ENCODE measurements at regions of chr12 and their contacts with region 1.

Region 1: GRCh38 chr12:1117970-1118563 is 127.0 kb downstream of the ERC1 start:
- H3K4me3 ChIP-seq: no peak overlapping the region
- H3K27ac ChIP-seq: no peak overlapping the region
- H3K4me1 ChIP-seq: no peaks in the 10 kb centered on the region
- CTCF ChIP-seq: peak; percentile 75

Region 2: DNA sequence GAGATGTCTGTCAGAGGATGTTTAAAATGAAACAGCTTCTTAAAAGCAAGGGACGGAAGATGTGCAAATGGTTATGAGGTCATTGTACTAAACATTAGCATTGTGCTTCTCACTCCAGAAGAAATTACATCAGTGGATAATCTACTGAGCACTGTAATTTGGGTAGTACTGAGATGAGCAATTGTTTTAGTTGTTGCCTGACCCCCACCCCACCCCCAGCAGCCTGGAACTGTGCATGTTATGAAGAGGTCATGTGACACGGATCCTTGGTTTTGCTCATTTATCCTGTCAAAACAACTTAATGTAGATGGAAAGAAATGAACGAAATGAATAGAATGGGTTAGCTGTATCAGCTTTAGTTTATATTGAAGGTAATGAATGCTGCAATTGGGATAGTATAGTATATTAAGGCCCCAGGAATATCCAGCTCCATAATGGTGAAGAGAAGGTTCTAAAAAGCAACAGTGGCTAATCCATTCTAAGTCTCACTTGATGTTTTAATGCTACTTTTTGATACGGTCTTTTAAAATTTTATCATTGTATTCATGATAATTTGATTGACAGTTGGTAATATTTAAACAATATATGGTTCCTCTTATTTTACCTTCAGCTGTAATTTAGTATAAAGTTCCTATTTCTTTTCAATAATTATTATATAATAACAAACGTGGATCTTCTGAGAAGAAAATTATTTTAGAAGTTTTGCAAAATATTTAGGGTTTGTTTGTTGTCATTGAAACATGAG is 307.2 kb before region 1 on chr12:
- CTCF ChIA-PET with region 1: interaction called, 20 read pairs
- POLR2A ChIA-PET with region 1: no interaction called
- H3K4me3 ChIP-seq: no peak overlapping the region
- H3K27ac ChIP-seq: no peak overlapping the region
- H3K4me1 ChIP-seq: peaks cover 28% of the 10 kb centered on the region
- CTCF ChIP-seq: no peak

Region 3: DNA sequence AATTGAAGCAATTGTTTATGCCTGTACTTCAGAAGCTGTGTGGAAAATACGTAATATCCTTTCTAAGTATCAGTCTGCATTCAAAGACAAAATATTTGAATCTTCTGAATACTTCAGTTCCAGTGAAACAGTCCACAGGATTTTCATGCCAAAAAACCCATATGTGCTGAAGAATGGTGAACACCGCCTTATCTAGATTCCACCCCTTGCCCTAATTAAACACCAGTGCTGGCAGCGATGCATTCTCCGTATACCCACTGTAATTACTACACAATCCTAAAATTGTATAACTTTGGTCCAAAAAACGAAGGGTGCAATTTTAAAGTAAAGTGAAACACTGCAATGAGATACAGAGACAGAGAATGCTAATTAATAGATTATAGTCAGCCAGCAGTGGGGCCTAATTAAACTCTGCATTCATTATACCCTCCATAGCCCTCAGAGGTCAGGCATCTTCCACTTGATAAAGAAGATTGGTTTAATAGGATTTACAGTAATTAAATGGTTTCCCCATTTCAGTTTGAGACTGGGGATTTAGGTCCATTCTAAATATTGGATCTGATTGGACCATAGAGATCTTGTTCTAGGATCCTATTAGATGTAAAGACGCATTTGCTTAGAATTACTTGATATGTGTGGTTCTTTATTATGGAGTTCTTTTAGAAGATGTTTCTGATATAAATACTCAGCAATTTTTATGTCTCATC is 83.2 kb before region 1 on chr12:
- CTCF ChIA-PET with region 1: no interaction called
- POLR2A ChIA-PET with region 1: no interaction called
- H3K4me3 ChIP-seq: no peak overlapping the region
- H3K27ac ChIP-seq: no peak overlapping the region
- H3K4me1 ChIP-seq: no peaks in the 10 kb centered on the region
- CTCF ChIP-seq: no peak

Region 4: GRCh38 chr12:1138691-1139090 is 20.6 kb after region 1 on chr12:
- CTCF ChIA-PET with region 1: interaction called, 16 read pairs
- POLR2A ChIA-PET with region 1: interaction called, 3 read pairs
- H3K4me3 ChIP-seq: no peak overlapping the region
- H3K27ac ChIP-seq: no peak overlapping the region
- H3K4me1 ChIP-seq: no peaks in the 10 kb centered on the region
- CTCF ChIP-seq: no peak

Region 5: DNA sequence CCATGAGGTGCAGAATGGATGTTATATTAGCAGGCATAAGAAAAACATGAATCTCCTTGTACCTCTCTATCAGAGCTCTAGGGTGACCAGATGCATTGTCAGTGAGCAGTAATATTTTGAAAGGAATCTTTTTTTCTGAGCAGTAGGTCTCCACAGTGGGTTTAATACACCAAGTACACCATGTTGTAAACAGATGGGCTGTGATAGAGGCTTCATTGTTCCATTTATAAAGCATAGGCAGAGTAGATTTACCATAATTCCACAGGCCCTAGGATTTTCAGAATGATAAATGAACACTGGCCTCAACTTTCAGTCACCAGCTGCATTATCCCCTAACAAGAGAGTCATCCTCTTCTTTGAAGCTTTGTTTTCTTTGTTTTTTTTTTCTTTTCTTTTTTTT is 58.1 kb after region 1 on chr12:
- CTCF ChIA-PET with region 1: interaction called, 12 read pairs
- POLR2A ChIA-PET with region 1: no interaction called
- H3K4me3 ChIP-seq: no peak overlapping the region
- H3K27ac ChIP-seq: no peak overlapping the region
- H3K4me1 ChIP-seq: peaks cover 10% of the 10 kb centered on the region
- CTCF ChIP-seq: no peak

Region 6: DNA sequence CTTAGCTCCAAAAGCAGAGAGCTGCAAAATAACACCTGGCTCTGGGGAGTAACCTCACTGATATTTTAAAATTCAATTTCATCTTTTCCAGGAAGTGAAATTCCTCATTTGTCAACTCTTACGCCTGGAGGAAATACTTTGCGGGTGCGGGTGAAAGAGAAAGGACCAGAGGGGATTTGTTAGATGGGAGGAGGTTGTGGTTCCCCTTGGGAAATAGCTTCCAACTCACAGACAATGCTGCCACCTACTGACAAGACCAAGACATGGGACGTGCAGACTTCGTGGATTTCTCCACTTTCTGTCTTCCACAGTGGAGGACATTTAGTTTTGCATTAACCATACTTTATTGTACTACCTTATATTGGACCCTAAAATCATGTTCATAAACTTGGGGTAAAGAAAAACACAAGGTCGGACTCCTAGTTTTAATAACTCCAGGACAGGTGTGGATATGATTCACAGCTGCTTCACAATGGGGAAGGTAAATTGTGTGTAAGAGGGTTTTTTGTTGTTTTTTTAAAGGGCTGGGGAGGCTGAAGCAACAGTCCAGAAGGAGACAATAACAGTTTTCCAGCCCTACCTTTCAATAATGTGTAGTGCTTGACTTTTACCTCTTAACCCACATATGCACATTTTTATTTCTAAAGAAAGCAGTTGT is 465.5 kb after region 1 on chr12:
- CTCF ChIA-PET with region 1: interaction called, 196 read pairs
- POLR2A ChIA-PET with region 1: interaction called, 9 read pairs
- H3K4me3 ChIP-seq: no peak overlapping the region
- H3K27ac ChIP-seq: no peak overlapping the region
- H3K4me1 ChIP-seq: peaks cover 8% of the 10 kb centered on the region
- CTCF ChIP-seq: peak; percentile 85

Region 7: DNA sequence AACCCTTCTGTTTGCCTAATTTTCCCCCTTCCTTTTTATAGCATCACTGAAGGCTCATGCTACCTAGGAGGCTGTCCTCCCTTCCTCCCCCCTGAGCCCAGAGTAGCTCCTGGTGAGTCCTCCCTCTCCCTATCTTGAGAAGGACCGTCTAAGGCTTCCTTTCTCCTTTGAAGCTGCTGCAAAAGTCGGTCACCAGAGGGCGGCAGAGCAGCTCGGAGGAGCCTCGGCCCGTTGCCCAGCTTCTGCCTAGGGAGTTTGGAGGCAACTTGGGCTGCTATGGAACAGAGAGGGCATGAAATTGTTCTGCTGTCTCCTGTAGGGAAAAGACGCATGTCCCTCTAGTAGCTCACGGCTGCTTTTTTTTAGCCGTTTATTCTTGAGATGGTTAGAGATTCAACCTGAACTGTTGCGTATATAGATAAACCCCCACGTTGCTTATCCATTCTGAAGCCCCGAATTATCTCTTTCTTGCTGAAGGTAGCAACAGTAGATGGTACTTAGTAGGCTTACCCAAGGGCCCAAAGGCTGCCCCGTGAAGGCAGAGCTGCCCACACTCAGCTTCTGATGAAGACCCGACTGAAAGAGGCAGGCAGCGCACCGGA is 516.6 kb after region 1 on chr12:
- CTCF ChIA-PET with region 1: interaction called, 12 read pairs
- POLR2A ChIA-PET with region 1: no interaction called
- H3K4me3 ChIP-seq: no peak overlapping the region
- H3K27ac ChIP-seq: no peak overlapping the region
- H3K4me1 ChIP-seq: no peaks in the 10 kb centered on the region; the same call in 1 of the 2 replicates
- CTCF ChIP-seq: peak; percentile 56

Region 8: DNA sequence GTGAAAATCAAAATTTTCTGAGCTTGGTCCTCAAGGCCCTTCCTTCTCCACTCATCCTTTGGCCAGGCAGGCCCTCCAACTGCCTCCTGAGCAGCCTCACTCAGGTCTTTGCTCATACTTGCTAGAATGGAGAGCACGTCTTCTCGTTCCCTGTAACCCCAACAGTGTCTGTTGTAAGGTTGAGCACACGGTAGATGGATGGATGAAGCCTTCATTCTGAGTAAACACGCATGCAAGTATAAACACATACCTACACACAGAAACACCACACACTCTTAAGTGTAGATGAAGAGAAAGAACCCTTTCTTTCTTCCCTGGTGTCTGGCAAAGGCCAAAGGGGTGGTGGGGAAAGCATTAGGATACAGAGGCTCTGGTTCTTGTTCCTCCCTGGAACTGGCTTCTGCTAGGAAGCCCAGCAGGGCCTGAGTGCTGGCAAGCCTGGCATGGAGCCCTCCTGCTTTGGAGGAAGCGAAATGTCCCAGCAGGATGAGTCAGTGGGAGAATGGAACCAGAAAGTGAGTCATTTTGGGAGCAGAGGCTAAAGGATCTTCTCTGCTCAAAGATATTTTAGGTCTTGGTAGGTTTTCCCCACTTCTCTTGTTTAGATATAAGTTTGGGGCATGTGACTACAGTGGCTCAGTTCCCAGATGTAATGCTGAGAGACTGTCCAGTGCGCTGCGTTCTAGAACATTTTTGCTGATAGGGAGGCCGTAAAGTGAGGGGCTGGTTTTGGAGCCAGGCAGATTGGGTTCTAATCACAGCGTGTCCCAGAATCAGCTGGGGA is 1062.1 kb after region 1 on chr12:
- CTCF ChIA-PET with region 1: no interaction called
- POLR2A ChIA-PET with region 1: no interaction called
- H3K4me3 ChIP-seq: no peak overlapping the region
- H3K27ac ChIP-seq: no peak overlapping the region
- H3K4me1 ChIP-seq: no peaks in the 10 kb centered on the region
- CTCF ChIP-seq: no peak